IMR-90 (cell line): ENCODE measurements at regions of chr1 and their contacts with region 1.

Region 1: GRCh38 chr1:240732390-240732789 is 120.4 kb upstream of the GREM2 start:
- DNase-seq: peak; percentile 79
- ATAC-seq: peak; percentile 91
- H3K4me3 ChIP-seq: no peak overlapping the region
- H3K27ac ChIP-seq: no peak overlapping the region
- H3K4me1 ChIP-seq: no peaks in the 10 kb centered on the region; the same call in 1 of the 2 replicates
- H3K27me3 ChIP-seq: no peaks in the 10 kb centered on the region
- CTCF ChIP-seq: peak; percentile 83
- POLR2A ChIP-seq: no peak
- RAD21 ChIP-seq: peak; percentile 87

Region 2: DNA sequence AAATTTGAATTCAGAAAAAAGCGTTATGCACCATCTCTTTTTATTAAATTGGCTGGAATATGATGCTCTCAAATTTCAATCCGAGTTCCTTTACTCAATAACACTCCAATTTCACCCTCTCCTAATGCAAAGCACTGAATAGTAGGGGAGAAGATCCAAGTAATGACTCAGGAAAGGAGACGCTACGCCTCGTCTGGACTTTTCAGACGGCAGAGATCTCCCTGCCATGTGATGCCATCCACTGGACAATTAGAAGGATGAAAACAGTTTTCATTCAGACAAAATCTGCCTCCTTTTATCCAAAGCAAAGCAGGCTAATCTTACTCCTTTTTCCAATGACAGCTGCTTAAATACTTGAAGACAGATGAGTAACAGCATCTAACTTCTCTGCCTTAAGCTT is 122.0 kb after region 1 on chr1:
- CTCF ChIA-PET with region 1: no interaction called
- POLR2A ChIA-PET with region 1: no interaction called
- dilution Hi-C with region 1: no loop called
- in situ Hi-C with region 1: no loop called
- intact Hi-C with region 1: loop called (anchors 5 kb)
- DNase-seq: peak; percentile 21
- ATAC-seq: peak; percentile 21; the same call in 1 of the 2 replicates
- H3K4me3 ChIP-seq: no peak overlapping the region
- H3K27ac ChIP-seq: no peak overlapping the region
- H3K4me1 ChIP-seq: no peaks in the 10 kb centered on the region
- H3K27me3 ChIP-seq: no peaks in the 10 kb centered on the region
- CTCF ChIP-seq: 0 out of 2 replicates have a peak, but pooled peaks have one; percentile 17
- POLR2A ChIP-seq: no peak
- RAD21 ChIP-seq: peak; percentile 43

Region 3: GRCh38 chr1:240946926-240947325 is 214.5 kb after region 1 on chr1:
- CTCF ChIA-PET with region 1: interaction called, 16 read pairs
- POLR2A ChIA-PET with region 1: no interaction called
- dilution Hi-C with region 1: no loop called
- in situ Hi-C with region 1: loop called (anchors 5 kb)
- intact Hi-C with region 1: loop called (anchors 1 kb)
- DNase-seq: peak; percentile 54
- ATAC-seq: peak; percentile 97
- H3K4me3 ChIP-seq: no peak overlapping the region
- H3K27ac ChIP-seq: no peak overlapping the region
- H3K4me1 ChIP-seq: no peaks in the 10 kb centered on the region
- H3K27me3 ChIP-seq: no peaks in the 10 kb centered on the region; the same call in 1 of the 2 replicates
- CTCF ChIP-seq: peak; percentile 75
- POLR2A ChIP-seq: no peak
- RAD21 ChIP-seq: peak; percentile 80

Region 4: DNA sequence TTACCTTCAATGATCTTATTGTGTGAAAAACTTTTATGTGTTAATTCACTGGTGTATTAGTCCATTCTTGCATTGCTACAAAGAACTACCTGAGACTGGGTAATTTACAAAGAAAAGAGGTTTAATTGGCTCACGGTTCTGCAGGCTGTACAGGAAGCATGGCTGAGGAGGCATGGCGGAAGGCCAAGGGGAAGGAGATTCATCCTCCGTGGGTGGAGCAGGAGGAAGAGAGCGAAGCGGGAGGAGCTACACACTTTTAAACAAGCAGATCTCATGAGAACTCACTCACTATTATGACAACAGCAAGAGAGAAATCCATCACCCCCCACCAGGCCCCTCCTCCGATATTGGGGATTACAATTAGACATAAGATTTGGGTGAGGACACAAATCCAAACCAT is 668.8 kb after region 1 on chr1:
- CTCF ChIA-PET with region 1: no interaction called
- POLR2A ChIA-PET with region 1: interaction called, 10 read pairs
- dilution Hi-C with region 1: no loop called
- in situ Hi-C with region 1: no loop called
- intact Hi-C with region 1: no loop called
- DNase-seq: no peak
- ATAC-seq: no peak
- H3K4me3 ChIP-seq: no peak overlapping the region
- H3K27ac ChIP-seq: no peak overlapping the region
- H3K4me1 ChIP-seq: no peaks in the 10 kb centered on the region
- H3K27me3 ChIP-seq: peaks cover 2% of the 10 kb centered on the region; the same call in 1 of the 2 replicates
- CTCF ChIP-seq: no peak
- POLR2A ChIP-seq: no peak
- RAD21 ChIP-seq: no peak

Region 5: GRCh38 chr1:241413386-241413785 is 681.0 kb after region 1 on chr1:
- CTCF ChIA-PET with region 1: no interaction called
- POLR2A ChIA-PET with region 1: no interaction called
- dilution Hi-C with region 1: no loop called
- in situ Hi-C with region 1: no loop called
- intact Hi-C with region 1: loop called (anchors 5 kb)
- DNase-seq: peak; percentile 92
- ATAC-seq: peak; percentile 72
- H3K4me3 ChIP-seq: no peak overlapping the region
- H3K27ac ChIP-seq: no peak overlapping the region
- H3K4me1 ChIP-seq: peaks cover 2% of the 10 kb centered on the region; the same call in 1 of the 2 replicates
- H3K27me3 ChIP-seq: no peaks in the 10 kb centered on the region
- CTCF ChIP-seq: no peak
- POLR2A ChIP-seq: no peak
- RAD21 ChIP-seq: no peak

Region 6: GRCh38 chr1:241485554-241485992 is 753.2 kb after region 1 on chr1:
- CTCF ChIA-PET with region 1: no interaction called
- POLR2A ChIA-PET with region 1: no interaction called
- dilution Hi-C with region 1: no loop called
- in situ Hi-C with region 1: no loop called
- intact Hi-C with region 1: loop called (anchors 1 kb)
- DNase-seq: peak; percentile 16
- ATAC-seq: peak; percentile 30; the same call in 1 of the 2 replicates
- H3K4me3 ChIP-seq: no peak overlapping the region
- H3K27ac ChIP-seq: no peak overlapping the region
- H3K4me1 ChIP-seq: peaks cover 6% of the 10 kb centered on the region
- H3K27me3 ChIP-seq: no peaks in the 10 kb centered on the region
- CTCF ChIP-seq: peak; percentile 33
- POLR2A ChIP-seq: no peak
- RAD21 ChIP-seq: peak; percentile 30; the same call in 1 of the 2 replicates

Region 7: GRCh38 chr1:241499910-241500309 is 767.5 kb after region 1 on chr1:
- CTCF ChIA-PET with region 1: interaction called, 4 read pairs
- POLR2A ChIA-PET with region 1: no interaction called
- dilution Hi-C with region 1: no loop called
- in situ Hi-C with region 1: loop called (anchors 5 kb)
- intact Hi-C with region 1: loop called (anchors 5 kb)
- DNase-seq: peak; percentile 62
- ATAC-seq: peak; percentile 71
- H3K4me3 ChIP-seq: no peak overlapping the region
- H3K27ac ChIP-seq: no peak overlapping the region
- H3K4me1 ChIP-seq: no peaks in the 10 kb centered on the region
- H3K27me3 ChIP-seq: no peaks in the 10 kb centered on the region
- CTCF ChIP-seq: peak; percentile 60
- POLR2A ChIP-seq: no peak
- RAD21 ChIP-seq: peak; percentile 77